Psoas muscle (tissue), 8 donors: ENCODE measurements at regions of chr22 and their contacts with region 1.

Region 1: DNA sequence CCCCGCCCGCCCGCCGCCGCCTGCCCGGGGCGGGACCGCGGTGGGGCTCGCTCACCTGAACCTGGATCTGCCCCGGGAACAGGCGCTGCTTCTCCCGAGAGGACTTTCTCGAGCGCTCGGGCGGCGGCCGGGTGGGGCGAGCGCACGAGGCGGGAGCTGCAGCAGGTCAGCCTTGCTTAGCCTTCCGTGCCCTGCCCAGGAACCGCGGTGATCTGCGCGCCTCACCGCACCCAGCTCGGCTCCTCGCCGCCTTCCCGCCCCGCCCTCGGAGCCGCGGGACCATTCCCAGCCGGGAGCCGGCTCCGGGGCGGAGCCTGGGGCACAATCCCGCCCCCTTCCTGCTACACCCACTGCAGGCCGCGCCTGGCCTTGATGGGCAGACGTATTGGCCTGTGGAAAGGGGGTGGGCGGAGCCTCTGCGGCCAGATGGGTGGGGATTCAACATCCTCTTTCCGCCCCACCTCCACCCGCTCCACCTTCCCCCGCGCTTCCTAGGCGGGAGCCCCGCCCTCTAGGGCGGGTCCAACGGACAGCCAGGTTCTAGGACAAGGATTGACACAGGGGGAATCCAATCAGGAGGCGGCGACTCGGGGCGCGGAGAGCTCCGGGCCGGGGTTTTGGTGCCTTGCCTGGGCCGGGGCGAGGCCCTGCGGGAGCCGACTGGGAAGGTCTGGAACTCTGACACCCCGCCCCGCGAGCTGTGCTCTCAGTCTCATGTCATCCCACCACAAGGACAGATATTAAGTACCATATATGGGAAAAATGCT is at the start of gene MYH9:
- DNase-seq: peak; percentile 100
- ATAC-seq: peak; percentile 90 to 93 (median 92)
- H3K4me3 ChIP-seq: peak within 1 kb of the TSS; percentile 87
- H3K27ac ChIP-seq: peak within 1 kb of the TSS; percentile 95
- H3K4me1 ChIP-seq: peaks cover 29% of the 10 kb centered on the region
- H3K27me3 ChIP-seq: no peaks in the 10 kb centered on the region
- CTCF ChIP-seq: no peak
- total RNA-seq, gene MYH9: 92.0 to 214 (median 179) TPM

Region 2: DNA sequence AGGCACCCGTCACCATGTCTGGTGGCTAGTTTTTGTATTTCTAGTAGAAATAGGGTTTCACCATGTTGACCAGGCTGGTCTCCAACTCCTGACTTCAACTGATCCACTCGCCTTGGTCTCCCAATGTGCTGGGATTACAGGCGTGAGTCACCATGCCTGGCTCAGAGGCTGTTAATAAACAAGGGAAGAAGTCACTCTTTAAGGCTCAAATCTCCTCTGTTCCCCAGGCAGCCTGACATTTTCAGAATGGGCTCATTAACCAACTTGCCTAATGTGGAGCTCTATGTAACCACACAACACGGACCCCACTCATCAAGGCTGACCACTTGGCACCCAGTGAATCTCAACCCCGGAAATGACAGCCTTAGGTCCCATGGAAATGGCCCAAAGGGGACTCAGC is 251.5 kb before region 1 on chr22:
- intact Hi-C with region 1: no loop called
- DNase-seq: peak; percentile 71 to 77
- ATAC-seq: peak in 3 of 4 donors; percentile 35 to 63 (median 42)
- H3K4me3 ChIP-seq: no peak overlapping the region
- H3K27ac ChIP-seq: no peak overlapping the region
- H3K4me1 ChIP-seq: no peaks in the 10 kb centered on the region
- H3K27me3 ChIP-seq: no peaks in the 10 kb centered on the region
- CTCF ChIP-seq: no peak

Region 3: DNA sequence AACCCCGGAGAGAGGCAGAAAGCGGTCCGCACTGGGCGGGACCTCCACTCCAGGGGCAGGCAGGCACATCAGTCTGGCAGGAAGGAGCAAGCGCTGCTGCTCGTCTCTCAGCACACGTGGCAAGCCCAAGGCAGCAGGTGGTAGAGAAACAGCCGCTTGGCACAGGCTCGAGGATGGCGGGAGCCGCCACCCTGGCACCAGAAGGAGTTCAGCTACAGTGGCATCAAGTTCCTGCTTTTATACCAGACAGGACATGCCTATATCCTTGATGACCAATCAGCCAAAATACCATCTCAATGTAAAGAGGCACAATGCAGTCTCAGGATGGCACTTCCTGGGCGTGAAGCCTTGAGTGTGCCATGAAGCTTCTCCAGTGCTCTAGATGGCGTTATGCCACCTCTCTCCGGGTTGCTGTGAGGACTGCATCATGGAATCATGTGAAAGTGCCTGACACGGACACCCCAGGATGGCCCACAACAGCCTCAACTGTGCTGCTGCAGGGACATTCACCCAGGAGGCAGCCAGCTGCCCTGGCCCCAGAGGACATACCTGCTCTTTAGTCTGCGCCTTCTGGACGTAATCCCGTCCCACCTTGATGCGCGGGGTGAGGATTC is 70.2 kb before region 1 on chr22:
- intact Hi-C with region 1: loop called in 1 of 2 experiments (anchors 5 kb)
- DNase-seq: peak; percentile 63 to 79
- ATAC-seq: peak; percentile 89 to 94 (median 92)
- H3K4me3 ChIP-seq: no peak overlapping the region
- H3K27ac ChIP-seq: peak overlapping the region; percentile 58
- H3K4me1 ChIP-seq: peaks cover 14% of the 10 kb centered on the region
- H3K27me3 ChIP-seq: no peaks in the 10 kb centered on the region
- CTCF ChIP-seq: no peak

Region 4: GRCh38 chr22:36331306-36331911 is 56.5 kb before region 1 on chr22:
- intact Hi-C with region 1: loop called in 1 of 2 experiments (anchors 5 kb)
- DNase-seq: peak; percentile 74 to 83
- ATAC-seq: peak; percentile 39 to 59 (median 47)
- H3K4me3 ChIP-seq: peak overlapping the region; percentile 29
- H3K27ac ChIP-seq: peak overlapping the region; percentile 86
- H3K4me1 ChIP-seq: peaks cover 91% of the 10 kb centered on the region
- H3K27me3 ChIP-seq: no peaks in the 10 kb centered on the region
- CTCF ChIP-seq: no peak

Region 5: DNA sequence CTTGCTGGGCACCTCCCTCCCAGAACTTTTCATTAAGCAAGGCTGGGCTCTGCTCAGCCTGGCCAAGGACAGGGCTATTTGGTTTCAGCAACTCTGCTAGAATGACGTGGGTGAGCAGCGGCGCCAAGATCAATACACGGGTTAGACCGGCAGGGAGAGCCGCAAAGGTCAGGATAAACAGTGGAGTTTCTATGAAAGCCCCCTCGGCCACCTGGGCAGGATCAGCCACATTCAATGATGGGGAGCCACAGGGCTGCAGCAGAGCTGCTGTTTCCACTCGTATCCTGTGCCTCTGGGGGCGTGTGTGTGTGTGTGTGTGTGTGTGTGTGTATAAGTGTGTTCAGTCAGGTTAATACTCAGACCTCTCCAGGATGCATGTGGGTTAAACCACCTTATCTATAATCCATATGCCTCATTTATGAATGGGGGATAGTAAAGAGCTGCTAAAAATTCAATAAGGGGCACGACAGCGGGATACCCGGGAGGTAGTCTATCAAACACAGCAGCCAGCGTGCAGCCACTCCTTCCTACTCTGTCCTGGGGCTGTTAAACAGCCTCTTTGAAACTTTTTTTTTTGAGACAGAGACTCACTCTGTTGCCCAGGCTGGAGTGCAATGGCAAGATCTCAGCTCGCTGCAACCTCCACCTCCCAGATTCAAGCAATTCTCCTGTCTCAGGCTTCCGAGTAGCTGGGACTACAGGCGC is 35.0 kb before region 1 on chr22:
- intact Hi-C with region 1: no loop called
- DNase-seq: peak in 1 of 2 donors; percentile 68
- ATAC-seq: peak; percentile 12 to 29 (median 22)
- H3K4me3 ChIP-seq: no peak overlapping the region
- H3K27ac ChIP-seq: peak overlapping the region; percentile 77
- H3K4me1 ChIP-seq: peaks cover 63% of the 10 kb centered on the region
- H3K27me3 ChIP-seq: no peaks in the 10 kb centered on the region
- CTCF ChIP-seq: no peak

Region 6: DNA sequence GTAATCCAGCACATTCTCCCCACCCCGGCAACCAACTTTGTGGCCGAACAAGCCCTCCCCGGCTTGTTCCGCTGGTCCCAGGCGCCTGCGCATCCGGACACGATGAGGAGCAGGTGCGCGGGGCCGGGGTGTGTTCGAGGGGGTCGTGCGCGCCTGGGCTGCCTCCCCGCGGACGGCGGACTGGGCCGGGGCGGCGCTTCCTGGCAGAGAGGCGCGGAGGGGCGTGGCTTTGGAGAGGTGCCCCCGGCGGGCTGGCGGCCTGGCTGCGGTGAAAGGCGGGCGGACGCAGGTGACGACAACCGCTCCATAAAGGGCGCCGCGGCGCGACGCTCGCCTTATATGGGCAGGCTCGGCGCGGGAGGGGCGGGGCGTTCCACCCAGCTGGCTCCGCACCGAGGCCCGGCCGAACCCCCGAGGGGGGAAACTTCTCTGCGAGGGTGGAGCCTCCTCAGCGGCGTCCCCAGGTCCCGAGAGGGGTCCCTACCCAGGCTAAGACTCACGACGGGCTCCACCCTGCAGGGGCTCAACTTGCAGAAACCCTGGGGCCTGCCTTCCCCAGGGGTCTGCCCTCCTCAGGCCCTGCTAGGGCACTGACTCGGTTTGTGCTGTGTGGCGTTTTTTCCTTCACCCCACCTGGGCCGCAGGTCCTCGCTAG is 67.1 kb after region 1 on chr22:
- intact Hi-C with region 1: loop called (anchors 5 kb)
- DNase-seq: peak; percentile 90 to 95
- ATAC-seq: peak; percentile 88 to 91 (median 90)
- H3K4me3 ChIP-seq: peak overlapping the region; percentile 69
- H3K27ac ChIP-seq: peak overlapping the region; percentile 96
- H3K4me1 ChIP-seq: peaks cover 48% of the 10 kb centered on the region
- H3K27me3 ChIP-seq: no peaks in the 10 kb centered on the region
- CTCF ChIP-seq: no peak

Region 7: DNA sequence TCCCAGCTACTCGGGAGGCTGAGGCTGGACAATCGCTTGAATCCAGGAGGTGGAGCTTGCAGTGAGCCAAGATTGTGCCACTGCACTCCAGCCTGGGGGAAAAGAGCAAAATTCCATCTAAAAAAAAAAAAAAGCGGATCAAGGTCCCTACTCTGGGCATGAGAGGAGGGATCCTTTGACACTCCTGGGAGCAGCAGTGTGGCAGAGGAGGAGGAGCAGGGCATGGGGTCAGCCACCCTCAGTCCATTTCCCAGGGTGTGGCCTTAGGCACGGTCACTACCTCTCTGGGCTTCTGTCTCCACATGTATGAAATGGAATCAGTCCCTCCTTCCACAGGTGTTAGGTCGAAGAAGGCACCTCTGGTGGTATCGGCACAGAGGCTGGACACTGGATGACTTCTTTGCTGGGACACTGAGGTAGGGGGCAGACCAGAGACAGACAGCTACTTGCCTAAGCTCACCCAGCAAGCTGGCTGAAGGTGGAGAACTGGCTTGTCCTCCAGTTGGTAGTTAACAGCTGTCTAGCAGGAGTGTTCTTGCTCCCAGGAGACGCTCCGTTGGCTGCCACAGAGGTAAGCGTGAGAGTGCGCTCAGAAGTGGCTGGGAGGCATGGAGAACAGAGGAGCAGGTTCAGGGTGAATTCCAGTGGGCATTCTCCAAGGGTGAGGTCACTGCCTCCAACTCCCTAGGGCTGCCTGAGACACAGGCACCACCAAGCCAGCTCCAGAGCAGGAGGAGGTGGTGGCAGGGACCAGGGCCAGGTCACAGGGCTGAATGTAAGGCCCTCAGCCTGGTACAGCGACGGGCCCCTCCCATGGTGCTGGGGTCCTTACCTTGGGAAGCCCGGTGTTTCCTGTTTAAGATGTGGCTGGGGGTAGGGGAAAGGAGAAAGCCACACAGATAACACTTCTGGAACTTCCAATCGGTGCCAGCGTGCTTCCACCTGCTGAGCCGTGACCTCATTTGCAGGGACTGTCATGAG is 74.0 kb after region 1 on chr22:
- intact Hi-C with region 1: loop called (anchors 2 to 5 kb)
- DNase-seq: peak; percentile 54 to 77
- ATAC-seq: peak; percentile 45 to 75 (median 62)
- H3K4me3 ChIP-seq: no peak overlapping the region
- H3K27ac ChIP-seq: peak overlapping the region; percentile 97
- H3K4me1 ChIP-seq: peaks cover 75% of the 10 kb centered on the region
- H3K27me3 ChIP-seq: no peaks in the 10 kb centered on the region
- CTCF ChIP-seq: no peak